Activated CD8-positive, alpha-beta T cell treated with anti-CD3 and anti-CD28 coated beads, Interleukin-2, amount 10 ng/mL, durations not matched to agents 7 days and 5 days (primary cell): ENCODE measurements at regions of chr19 and their contacts with region 1.

Region 1: GRCh38 chr19:16338470-16339360 is 14.1 kb downstream of the KLF2 start:
- DNase-seq: peak; percentile 76
- ATAC-seq: peak; percentile 70
- H3K4me3 Mint-ChIP-seq: peak overlapping the region; percentile 65
- H3K27ac Mint-ChIP-seq: peak overlapping the region; percentile 90
- H3K4me1 Mint-ChIP-seq: peaks cover 69% of the 10 kb centered on the region
- H3K27me3 Mint-ChIP-seq: peaks cover 14% of the 10 kb centered on the region

Region 2: DNA sequence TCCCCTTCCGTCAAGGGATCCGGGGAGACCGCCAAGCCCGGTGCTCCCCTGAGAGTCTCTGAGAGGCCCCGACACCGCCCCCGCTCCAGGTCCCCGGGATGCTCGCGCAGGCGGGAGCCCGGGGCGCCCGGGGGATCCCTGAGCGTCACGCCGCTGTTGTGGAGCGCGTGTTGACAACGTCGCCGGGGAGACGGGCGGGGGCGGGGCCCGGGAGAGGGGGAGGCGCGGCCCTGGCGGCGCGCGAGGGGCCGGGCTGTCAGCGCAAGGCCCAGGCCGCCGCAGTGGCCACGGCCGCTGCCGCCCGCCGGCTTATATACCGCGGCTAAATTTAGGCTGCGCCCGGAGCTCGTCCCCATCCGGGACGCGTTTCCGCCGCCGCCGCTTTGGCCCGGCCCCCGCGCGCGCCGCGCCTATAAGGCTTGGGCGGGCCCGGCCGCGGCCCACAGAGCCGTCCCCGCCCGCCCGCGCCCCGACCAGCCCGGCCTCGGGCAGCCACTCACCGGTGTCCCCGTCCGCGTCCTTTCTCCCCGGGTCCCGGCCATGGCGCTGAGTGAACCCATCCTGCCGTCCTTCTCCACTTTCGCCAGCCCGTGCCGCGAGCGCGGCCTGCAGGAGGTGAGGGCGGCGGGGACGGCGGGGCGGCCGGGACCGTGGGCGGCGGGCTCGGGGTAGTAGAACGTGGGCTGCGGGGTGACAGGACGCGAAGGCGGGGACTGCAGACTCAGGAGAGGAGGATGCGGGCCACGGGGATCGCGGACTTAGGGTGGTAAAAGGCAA is 14.1 kb before region 1 on chr19 and contains the start of gene KLF2:
- CTCF ChIA-PET with region 1: interaction called, 15 read pairs
- POLR2A ChIA-PET with region 1: interaction called, 71 read pairs
- DNase-seq: peak; percentile 93
- ATAC-seq: peak; percentile 72
- H3K4me3 Mint-ChIP-seq: peak within 1 kb of the TSS; percentile 66
- H3K27ac Mint-ChIP-seq: no peak within 1 kb of the TSS
- H3K4me1 Mint-ChIP-seq: peaks cover 49% of the 10 kb centered on the region
- H3K27me3 Mint-ChIP-seq: peaks cover 34% of the 10 kb centered on the region
- total RNA-seq, gene KLF2: 96.0 to 100 TPM

Region 3: GRCh38 chr19:16457195-16457953 is 118.7 kb after region 1 on chr19:
- CTCF ChIA-PET with region 1: no interaction called
- POLR2A ChIA-PET with region 1: no interaction called
- DNase-seq: no peak
- ATAC-seq: no peak
- H3K4me3 Mint-ChIP-seq: no peak overlapping the region
- H3K27ac Mint-ChIP-seq: no peak overlapping the region
- H3K4me1 Mint-ChIP-seq: peaks cover 24% of the 10 kb centered on the region
- H3K27me3 Mint-ChIP-seq: no peaks in the 10 kb centered on the region